ENCODE measurements at regions of chr1 and their contacts with region 1.

Region 1: GRCh38 chr1:34786521-34787325 is 5.7 kb downstream of the GJB3 start:
- DNase-seq: peak; percentile 81
- CTCF ChIP-seq: peak; percentile 73

Region 2: DNA sequence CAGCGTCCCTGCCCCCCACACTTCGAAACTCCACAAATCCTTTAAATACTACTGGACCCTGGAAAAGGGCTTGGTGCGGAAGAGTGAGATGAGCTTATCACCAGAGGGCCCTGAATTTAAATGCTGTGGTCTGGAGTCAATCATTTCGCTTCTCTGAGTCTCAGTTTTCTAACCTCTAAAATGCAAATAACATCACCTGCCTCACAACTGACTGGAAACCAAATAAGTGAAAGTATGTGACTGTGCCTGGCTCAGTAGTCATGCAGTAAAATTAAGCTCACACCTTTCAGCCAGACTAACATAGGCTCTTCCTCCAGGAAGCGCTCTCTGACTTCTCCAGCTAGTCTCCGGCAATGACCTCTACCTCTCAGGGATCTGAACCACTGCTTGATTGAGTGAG is 10.3 kb after region 1 on chr1:
- CTCF ChIA-PET with region 1: interaction called, 11 read pairs
- POLR2A ChIA-PET with region 1: no interaction called
- DNase-seq: peak; percentile 50
- CTCF ChIP-seq: no peak

Region 3: DNA sequence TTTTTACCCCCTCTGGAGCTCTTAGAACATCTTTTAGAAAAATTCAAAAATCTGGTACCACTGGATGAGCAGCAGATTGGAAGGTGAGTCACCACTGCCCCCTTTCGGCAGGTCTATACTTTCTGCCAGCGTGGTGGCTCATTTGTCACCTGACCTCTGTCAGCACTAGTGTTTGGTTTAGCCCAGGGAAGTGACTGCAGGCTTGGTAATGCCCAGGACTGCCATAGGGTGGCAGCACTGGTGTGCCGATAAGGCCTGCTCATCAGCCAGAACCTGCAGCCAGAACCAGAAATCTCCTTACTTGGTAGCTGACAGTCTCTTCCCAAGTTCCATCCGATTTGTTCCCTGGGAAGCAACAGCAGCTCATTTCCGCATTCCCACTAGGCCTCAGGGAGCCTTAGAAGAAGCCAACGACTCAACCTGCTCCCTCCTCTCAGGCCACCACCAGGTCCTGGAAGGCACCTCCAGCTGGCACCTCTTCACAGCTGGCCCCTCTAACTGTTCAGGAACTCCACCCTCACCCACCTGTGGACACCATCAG is 66.0 kb after region 1 on chr1:
- CTCF ChIA-PET with region 1: interaction called, 22 read pairs
- POLR2A ChIA-PET with region 1: no interaction called
- DNase-seq: peak; percentile 90
- CTCF ChIP-seq: peak; percentile 92

Region 4: DNA sequence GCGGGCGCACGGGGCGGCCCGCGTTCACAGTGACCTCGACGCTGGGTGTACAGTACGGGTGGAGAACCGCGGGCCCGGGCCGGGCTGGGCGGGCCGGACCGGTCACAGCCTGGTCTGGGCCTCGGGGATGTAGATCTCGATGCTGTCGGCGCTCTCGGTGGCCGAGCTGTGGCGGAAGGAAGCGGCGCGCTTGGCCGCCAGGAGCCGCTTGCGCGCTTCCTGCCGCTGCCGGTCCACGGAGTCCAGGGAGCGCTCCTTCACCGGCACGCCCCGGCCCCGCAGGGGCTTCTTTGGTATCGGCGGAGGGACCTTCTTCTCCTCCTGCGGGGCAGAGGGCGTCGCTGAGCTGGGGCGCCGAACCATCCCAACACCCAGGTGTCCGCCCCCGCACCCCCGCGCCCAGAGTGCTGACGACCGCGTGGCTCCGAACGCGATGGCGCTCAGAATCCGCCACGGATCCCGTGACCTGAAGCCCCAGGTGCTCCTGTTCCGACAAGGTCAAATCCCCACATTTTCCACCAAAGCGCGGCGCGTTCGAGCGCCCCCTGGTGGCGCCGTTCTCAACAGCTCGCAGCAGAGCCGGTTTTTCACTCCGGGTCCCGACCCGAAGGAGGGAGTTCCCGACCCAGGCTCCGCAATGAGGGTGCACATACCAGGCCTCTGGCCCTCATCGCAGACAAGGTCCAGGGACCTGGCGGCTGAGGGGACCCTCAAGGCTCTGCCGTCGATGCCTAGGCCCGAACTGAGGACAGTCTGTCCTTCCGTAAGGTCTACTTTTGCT is 79.4 kb after region 1 on chr1:
- CTCF ChIA-PET with region 1: interaction called, 10 read pairs
- POLR2A ChIA-PET with region 1: no interaction called
- DNase-seq: peak; percentile 89
- CTCF ChIP-seq: peak; percentile 93

Measured in GM10248 (cell line).